ENCODE measurements at regions of chr2 and their contacts with region 1.

Region 1: GRCh38 chr2:176140513-176141317 is 10.6 kb upstream of the HOXD4 start:
- DNase-seq: peak; percentile 76
- H3K4me3 ChIP-seq: peak overlapping the region; percentile 37 to 73 (median 46)
- H3K27ac ChIP-seq: peak overlapping the region; percentile 91 to 96 (median 94)
- H3K4me1 ChIP-seq: peaks cover 10 to 51% (median 24%) of the 10 kb centered on the region in 4 donors
- H3K27me3 ChIP-seq: peaks cover 33% of the 10 kb centered on the region
- CTCF ChIP-seq: peak; percentile 90 to 99 (median 96)
- EP300 ChIP-seq: no peak
- POLR2A ChIP-seq: no peak

Region 2: GRCh38 chr2:176079831-176080539 is 60.7 kb before region 1 on chr2:
- in situ Hi-C with region 1: no loop called
- intact Hi-C with region 1: no loop called
- DNase-seq: no peak
- H3K4me3 ChIP-seq: peak overlapping the region in 3 of 4 donors; percentile 13 to 48 (median 26)
- H3K27ac ChIP-seq: no peak overlapping the region
- H3K4me1 ChIP-seq: peaks cover 8 to 36% (median 26%) of the 10 kb centered on the region in 4 donors
- H3K27me3 ChIP-seq: peaks cover 99% of the 10 kb centered on the region
- CTCF ChIP-seq: peak; percentile 57 to 83 (median 69)
- EP300 ChIP-seq: no peak
- POLR2A ChIP-seq: no peak

Region 3: GRCh38 chr2:176454893-176455811 is 314.4 kb after region 1 on chr2:
- in situ Hi-C with region 1: loop called in 2 of 4 experiments (anchors 5 kb)
- intact Hi-C with region 1: loop called (anchors 2 kb)
- DNase-seq: peak; percentile 91
- H3K4me3 ChIP-seq: no peak overlapping the region
- H3K27ac ChIP-seq: peak overlapping the region; percentile 25 to 68 (median 51)
- H3K4me1 ChIP-seq: peaks cover 0 to 7% (median 3%) of the 10 kb centered on the region in 4 donors
- H3K27me3 ChIP-seq: no peaks in the 10 kb centered on the region
- CTCF ChIP-seq: peak; percentile 89 to 96 (median 95)
- EP300 ChIP-seq: no peak
- POLR2A ChIP-seq: no peak

Region 4: GRCh38 chr2:176554101-176555048 is 413.7 kb after region 1 on chr2:
- in situ Hi-C with region 1: loop called (anchors 5 to 10 kb)
- intact Hi-C with region 1: loop called (anchors 5 kb)
- DNase-seq: peak; percentile 25
- H3K4me3 ChIP-seq: peak overlapping the region; percentile 25 to 47 (median 37)
- H3K27ac ChIP-seq: peak overlapping the region; percentile 72 to 85 (median 76)
- H3K4me1 ChIP-seq: peaks cover 4 to 24% (median 9%) of the 10 kb centered on the region in 4 donors
- H3K27me3 ChIP-seq: no peaks in the 10 kb centered on the region
- CTCF ChIP-seq: peak; percentile 78 to 86 (median 82)
- EP300 ChIP-seq: no peak
- POLR2A ChIP-seq: no peak

Region 5: DNA sequence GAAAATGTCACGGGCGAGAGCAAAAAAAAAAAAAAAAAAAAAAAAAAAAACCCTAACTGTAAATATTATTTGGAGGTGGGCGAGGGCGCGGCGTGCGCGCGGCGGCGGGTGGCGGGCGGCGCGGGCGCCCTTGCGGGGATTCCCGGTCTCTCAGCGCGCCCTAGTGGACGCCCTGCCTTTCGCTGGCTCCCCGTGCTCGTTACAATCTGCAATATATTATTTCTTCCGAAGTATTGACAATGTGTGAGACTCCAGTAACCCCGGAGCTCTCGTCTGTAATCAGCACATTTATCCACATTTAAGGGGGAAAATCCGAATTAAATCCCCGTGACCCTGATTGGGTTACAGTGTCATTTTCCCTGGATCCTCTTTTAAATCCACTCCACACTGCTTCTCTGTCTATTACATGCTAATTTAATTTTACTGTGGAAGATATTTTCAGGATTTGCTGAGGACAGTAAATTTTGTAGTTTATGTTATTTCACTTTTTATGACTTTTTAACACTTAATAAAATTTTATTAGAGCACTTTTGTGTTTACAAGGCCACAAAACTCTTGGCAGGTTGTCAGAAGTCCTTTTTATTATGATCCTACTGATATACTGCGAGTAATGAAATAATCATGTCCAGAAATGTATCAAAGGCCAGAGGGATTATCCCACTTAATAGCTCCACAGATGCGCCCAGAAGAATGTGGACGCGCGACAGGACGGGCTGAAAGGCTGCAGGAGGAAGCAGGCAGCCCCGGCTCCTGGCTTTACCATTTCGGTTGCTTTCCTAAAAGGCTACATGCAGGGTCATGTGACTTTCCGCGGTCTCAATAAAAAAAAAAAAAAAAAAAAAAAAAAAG is 497.7 kb after region 1 on chr2:
- in situ Hi-C with region 1: loop called in 3 of 4 experiments (anchors 5 to 10 kb)
- intact Hi-C with region 1: loop called (anchors 1 kb)
- DNase-seq: peak; percentile 77
- H3K4me3 ChIP-seq: peak overlapping the region; percentile 69 to 81 (median 78)
- H3K27ac ChIP-seq: peak overlapping the region; percentile 80 to 85 (median 82)
- H3K4me1 ChIP-seq: peaks cover 0 to 9% (median 5%) of the 10 kb centered on the region in 4 donors
- H3K27me3 ChIP-seq: peaks cover 39% of the 10 kb centered on the region
- CTCF ChIP-seq: peak; percentile 35 to 78 (median 69)
- EP300 ChIP-seq: no peak
- POLR2A ChIP-seq: no peak

Region 6: GRCh38 chr2:176814306-176815052 is 673.8 kb after region 1 on chr2:
- in situ Hi-C with region 1: loop called in 1 of 4 experiments (anchors 25 kb)
- intact Hi-C with region 1: no loop called
- DNase-seq: no peak
- H3K4me3 ChIP-seq: no peak overlapping the region
- H3K27ac ChIP-seq: no peak overlapping the region
- H3K4me1 ChIP-seq: no peaks in the 10 kb centered on the region
- H3K27me3 ChIP-seq: no peaks in the 10 kb centered on the region
- CTCF ChIP-seq: peak; percentile 58 to 71 (median 60)
- EP300 ChIP-seq: no peak
- POLR2A ChIP-seq: no peak

Region 7: DNA sequence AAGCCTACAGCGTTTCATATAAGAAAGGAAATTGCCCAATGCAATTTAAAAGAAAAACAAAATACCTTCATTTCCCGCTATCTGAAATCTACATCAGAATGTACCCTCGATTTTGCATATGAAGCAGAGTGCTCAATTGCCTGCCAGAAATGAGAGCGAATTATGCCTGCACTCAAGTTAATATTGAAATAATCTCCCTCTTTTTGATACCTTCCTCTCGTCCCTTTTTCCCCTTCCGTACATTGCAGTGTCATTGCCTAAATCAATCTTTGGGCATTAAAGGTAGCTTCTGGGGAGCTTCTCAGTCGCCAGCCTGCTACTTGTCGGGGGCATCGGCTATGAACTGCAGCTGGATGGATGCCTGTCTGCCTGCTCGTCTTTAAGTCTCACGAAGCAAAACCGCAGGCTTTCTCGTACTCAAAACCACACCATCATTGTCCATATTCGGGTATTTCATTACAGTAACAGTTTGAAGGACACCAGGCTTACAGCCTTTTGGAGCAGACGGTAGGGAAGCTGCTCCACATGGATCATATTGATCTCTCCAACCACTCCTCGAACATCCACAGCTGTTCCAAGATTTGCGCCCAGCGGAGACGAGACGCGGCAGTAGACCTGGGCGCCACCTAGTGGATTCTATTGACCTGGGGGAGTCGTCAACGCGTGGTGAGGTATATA is 1007.9 kb after region 1 on chr2:
- in situ Hi-C with region 1: no loop called
- intact Hi-C with region 1: loop called (anchors 5 kb)
- DNase-seq: peak; percentile 84
- H3K4me3 ChIP-seq: peak overlapping the region in 3 of 4 donors; percentile 19 to 46 (median 23)
- H3K27ac ChIP-seq: no peak overlapping the region
- H3K4me1 ChIP-seq: peaks cover 0 to 11% (median 9%) of the 10 kb centered on the region in 4 donors
- H3K27me3 ChIP-seq: peaks cover 23% of the 10 kb centered on the region
- CTCF ChIP-seq: peak; percentile 71 to 89 (median 79)
- EP300 ChIP-seq: no peak
- POLR2A ChIP-seq: no peak

Region 8: GRCh38 chr2:177155631-177156030 is 1014.9 kb after region 1 on chr2:
- in situ Hi-C with region 1: no loop called
- intact Hi-C with region 1: loop called (anchors 5 kb)
- DNase-seq: no peak
- H3K4me3 ChIP-seq: no peak overlapping the region
- H3K27ac ChIP-seq: no peak overlapping the region
- H3K4me1 ChIP-seq: no peaks in the 10 kb centered on the region
- H3K27me3 ChIP-seq: no peaks in the 10 kb centered on the region
- CTCF ChIP-seq: no peak
- EP300 ChIP-seq: no peak
- POLR2A ChIP-seq: no peak